Naive thymus-derived CD4-positive, alpha-beta T cell (primary cell): ENCODE measurements at regions of chr12 and their contacts with region 1.

Region 1: DNA sequence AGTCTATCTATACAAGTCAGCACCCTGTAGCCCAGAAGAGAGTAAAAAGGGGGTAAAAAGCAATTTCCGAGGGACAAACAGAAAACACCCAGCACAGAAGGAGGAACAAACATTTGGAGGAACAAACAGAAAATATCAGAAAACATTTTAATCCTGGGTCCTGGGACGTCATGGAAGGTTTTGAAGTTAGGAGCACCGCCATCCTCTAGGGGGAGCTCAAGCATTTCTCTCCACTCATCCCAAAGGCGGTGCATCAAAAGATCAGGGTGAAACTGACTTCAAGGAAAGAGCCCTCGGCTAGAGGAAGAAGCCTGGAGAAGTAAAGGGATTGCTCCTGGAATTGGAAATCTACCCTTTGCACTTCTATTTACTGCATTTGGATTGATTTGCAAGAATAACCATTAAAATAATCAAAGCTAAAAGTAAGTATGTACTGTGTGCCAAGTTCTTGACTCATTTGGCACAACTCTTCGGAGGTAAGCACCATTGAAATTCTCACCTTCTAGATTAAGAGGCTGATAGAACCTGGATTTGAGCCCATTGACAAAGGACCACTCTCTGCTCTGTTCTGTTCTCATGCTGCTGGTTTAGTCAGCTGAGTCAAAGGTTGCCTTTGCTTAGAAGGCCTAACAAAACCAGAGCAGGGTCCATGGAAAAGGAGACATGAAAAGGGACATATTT is 17.2 kb upstream of the POC1B start:
- DNase-seq: peak; percentile 20 to 75 (median 64)
- ATAC-seq: peak; percentile 91
- H3K4me3 ChIP-seq: no peak overlapping the region
- H3K4me3 Mint-ChIP-seq: peak overlapping the region in 1 of 10 donors; percentile 36
- H3K27ac ChIP-seq: no peak overlapping the region
- H3K27ac Mint-ChIP-seq: peak overlapping the region in 1 of 9 donors; percentile 3
- H3K4me1 ChIP-seq: no peaks in the 10 kb centered on the region
- H3K4me1 Mint-ChIP-seq: peaks cover 5 to 10% (median 6%) of the 10 kb centered on the region in 7 donors
- H3K27me3 ChIP-seq: no peaks in the 10 kb centered on the region
- H3K27me3 Mint-ChIP-seq: peaks cover 0 to 4% (median 0%) of the 10 kb centered on the region in 5 donors

Region 2: DNA sequence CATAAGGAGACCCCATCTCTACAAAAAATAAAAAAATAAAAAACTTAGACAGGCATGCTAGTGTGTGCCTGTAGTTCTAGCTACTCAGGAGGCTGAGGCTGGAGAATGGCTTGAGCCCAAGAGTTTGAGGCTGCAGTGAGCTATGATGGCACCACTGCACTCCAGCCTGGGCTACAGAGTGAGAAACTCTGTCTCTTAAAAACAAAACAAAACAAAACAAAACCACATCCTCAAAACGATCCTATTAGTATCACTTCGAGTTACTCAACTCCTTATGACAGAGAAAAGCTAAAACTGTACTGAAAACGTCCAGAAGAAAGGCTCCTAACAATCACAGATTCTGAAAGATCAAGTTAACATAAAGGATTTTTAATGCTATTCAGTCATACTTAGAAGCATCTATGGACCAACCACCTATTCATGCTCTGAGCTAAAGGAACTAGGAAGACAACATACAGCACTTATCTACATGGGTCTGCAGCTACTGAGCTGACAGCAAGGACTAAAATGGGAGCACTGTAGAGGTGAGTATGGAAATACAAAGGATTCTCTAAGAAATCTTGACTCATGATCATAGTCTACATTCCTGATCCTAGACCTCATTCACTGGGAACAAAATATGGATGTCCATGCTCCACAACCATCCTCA is 115.4 kb before region 1 on chr12:
- CTCF ChIA-PET with region 1: no interaction called
- POLR2A ChIA-PET with region 1: no interaction called
- intact Hi-C with region 1: no loop called
- DNase-seq: peak in 1 of 9 donors; percentile 22
- ATAC-seq: peak; percentile 83
- H3K4me3 ChIP-seq: no peak overlapping the region
- H3K4me3 Mint-ChIP-seq: peak overlapping the region in 8 of 10 donors; percentile 0 to 83 (median 17)
- H3K27ac ChIP-seq: no peak overlapping the region
- H3K27ac Mint-ChIP-seq: peak overlapping the region in 5 of 9 donors; percentile 2 to 95 (median 52)
- H3K4me1 ChIP-seq: peaks cover 5 to 29% of the 10 kb centered on the region in 2 donors
- H3K4me1 Mint-ChIP-seq: peaks cover 12 to 48% (median 24%) of the 10 kb centered on the region in 7 donors
- H3K27me3 ChIP-seq: no peaks in the 10 kb centered on the region
- H3K27me3 Mint-ChIP-seq: no peaks in the 10 kb centered on the region

Region 3: GRCh38 chr12:89514751-89515150 is 28.3 kb before region 1 on chr12:
- CTCF ChIA-PET with region 1: no interaction called
- POLR2A ChIA-PET with region 1: no interaction called
- intact Hi-C with region 1: no loop called
- DNase-seq: no peak
- ATAC-seq: peak; percentile 32
- H3K4me3 ChIP-seq: no peak overlapping the region
- H3K4me3 Mint-ChIP-seq: no peak overlapping the region
- H3K27ac ChIP-seq: no peak overlapping the region
- H3K27ac Mint-ChIP-seq: no peak overlapping the region
- H3K4me1 ChIP-seq: peaks cover 0 to 7% of the 10 kb centered on the region in 2 donors
- H3K4me1 Mint-ChIP-seq: peaks cover 4 to 31% (median 17%) of the 10 kb centered on the region in 7 donors
- H3K27me3 ChIP-seq: no peaks in the 10 kb centered on the region
- H3K27me3 Mint-ChIP-seq: no peaks in the 10 kb centered on the region

Region 4: DNA sequence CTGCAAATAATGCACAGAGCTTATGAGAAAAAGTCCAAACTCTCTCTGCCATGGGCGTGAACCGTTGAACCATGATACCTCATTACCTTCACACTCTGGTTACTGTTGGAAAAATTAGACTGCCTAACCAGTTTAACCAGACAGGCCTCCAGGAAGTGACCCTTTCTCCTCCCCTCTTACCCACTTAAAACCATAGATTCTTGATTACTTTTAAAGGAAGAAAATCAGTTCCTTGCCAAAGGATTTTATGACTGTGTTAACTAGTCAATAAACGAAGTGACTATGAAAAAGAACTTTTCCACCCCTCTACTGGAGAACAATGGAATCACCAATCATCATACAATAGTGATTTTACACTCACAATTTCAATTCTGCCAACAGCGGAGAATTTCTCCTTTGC is 419.6 kb after region 1 on chr12:
- CTCF ChIA-PET with region 1: no interaction called
- POLR2A ChIA-PET with region 1: no interaction called
- intact Hi-C with region 1: loop called (anchors 1 to 2 kb)
- DNase-seq: peak in 2 of 9 donors; percentile 8 to 14
- ATAC-seq: no peak
- H3K4me3 ChIP-seq: no peak overlapping the region
- H3K4me3 Mint-ChIP-seq: no peak overlapping the region
- H3K27ac ChIP-seq: no peak overlapping the region
- H3K27ac Mint-ChIP-seq: no peak overlapping the region
- H3K4me1 ChIP-seq: no peaks in the 10 kb centered on the region
- H3K4me1 Mint-ChIP-seq: peaks cover 0 to 10% (median 0%) of the 10 kb centered on the region in 7 donors
- H3K27me3 ChIP-seq: no peaks in the 10 kb centered on the region
- H3K27me3 Mint-ChIP-seq: peaks cover 0 to 22% (median 0%) of the 10 kb centered on the region in 5 donors

Region 5: GRCh38 chr12:90163975-90164374 is 620.9 kb after region 1 on chr12:
- CTCF ChIA-PET with region 1: no interaction called
- POLR2A ChIA-PET with region 1: no interaction called
- intact Hi-C with region 1: loop called in 1 of 2 experiments (anchors 2 kb)
- DNase-seq: no peak
- ATAC-seq: no peak
- H3K4me3 ChIP-seq: no peak overlapping the region
- H3K4me3 Mint-ChIP-seq: no peak overlapping the region
- H3K27ac ChIP-seq: no peak overlapping the region
- H3K27ac Mint-ChIP-seq: no peak overlapping the region
- H3K4me1 ChIP-seq: no peaks in the 10 kb centered on the region
- H3K4me1 Mint-ChIP-seq: no peaks in the 10 kb centered on the region
- H3K27me3 ChIP-seq: no peaks in the 10 kb centered on the region
- H3K27me3 Mint-ChIP-seq: no peaks in the 10 kb centered on the region

Region 6: GRCh38 chr12:90854136-90854689 is 1311.2 kb after region 1 on chr12:
- CTCF ChIA-PET with region 1: interaction called, 3 read pairs
- POLR2A ChIA-PET with region 1: no interaction called
- intact Hi-C with region 1: loop called (anchors 1 to 5 kb)
- DNase-seq: peak in 3 of 9 donors; percentile 3 to 19 (median 8)
- ATAC-seq: no peak
- H3K4me3 ChIP-seq: no peak overlapping the region
- H3K4me3 Mint-ChIP-seq: no peak overlapping the region
- H3K27ac ChIP-seq: no peak overlapping the region
- H3K27ac Mint-ChIP-seq: no peak overlapping the region
- H3K4me1 ChIP-seq: no peaks in the 10 kb centered on the region
- H3K4me1 Mint-ChIP-seq: no peaks in the 10 kb centered on the region
- H3K27me3 ChIP-seq: no peaks in the 10 kb centered on the region
- H3K27me3 Mint-ChIP-seq: peaks cover 0 to 5% (median 0%) of the 10 kb centered on the region in 5 donors

Region 7: DNA sequence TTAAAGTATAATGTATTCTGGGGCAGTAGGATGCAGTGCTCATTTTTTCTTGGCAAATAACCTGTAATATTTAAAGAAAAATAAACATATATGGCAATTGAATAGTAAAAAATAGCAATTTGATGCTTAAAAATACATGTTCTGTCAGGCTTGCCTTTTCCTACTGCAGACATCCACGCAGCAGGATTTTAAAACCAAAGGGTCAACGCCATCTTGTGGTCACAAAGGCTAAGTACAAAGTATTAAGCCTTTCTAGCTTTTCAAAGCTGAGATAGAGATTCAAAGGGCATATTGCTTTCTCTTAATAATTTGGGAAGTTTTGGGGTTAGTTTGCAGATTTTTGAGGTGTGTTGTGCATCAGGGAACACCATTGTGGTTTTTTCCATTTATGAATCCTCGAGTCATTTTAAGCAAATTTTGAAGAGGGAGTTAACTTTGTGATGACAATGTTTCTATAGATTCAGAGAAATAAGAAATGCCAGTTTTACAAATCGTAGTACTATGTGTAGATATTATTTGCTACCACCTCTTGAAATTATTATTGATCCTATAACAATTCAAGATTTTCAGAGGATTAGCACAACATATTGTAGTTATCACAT is 1416.6 kb after region 1 on chr12:
- CTCF ChIA-PET with region 1: interaction called, 3 read pairs
- POLR2A ChIA-PET with region 1: no interaction called
- intact Hi-C with region 1: loop called in 1 of 2 experiments (anchors 5 kb)
- DNase-seq: peak in 5 of 9 donors; percentile 13 to 28 (median 20)
- ATAC-seq: peak; percentile 60
- H3K4me3 ChIP-seq: no peak overlapping the region
- H3K4me3 Mint-ChIP-seq: no peak overlapping the region
- H3K27ac ChIP-seq: no peak overlapping the region
- H3K27ac Mint-ChIP-seq: no peak overlapping the region
- H3K4me1 ChIP-seq: no peaks in the 10 kb centered on the region
- H3K4me1 Mint-ChIP-seq: peaks cover 0 to 2% (median 0%) of the 10 kb centered on the region in 7 donors
- H3K27me3 ChIP-seq: peaks cover 0 to 3% of the 10 kb centered on the region in 2 donors
- H3K27me3 Mint-ChIP-seq: peaks cover 0 to 9% (median 0%) of the 10 kb centered on the region in 5 donors